ENCODE measurements at regions of chrX and their contacts with region 1.

Region 1: DNA sequence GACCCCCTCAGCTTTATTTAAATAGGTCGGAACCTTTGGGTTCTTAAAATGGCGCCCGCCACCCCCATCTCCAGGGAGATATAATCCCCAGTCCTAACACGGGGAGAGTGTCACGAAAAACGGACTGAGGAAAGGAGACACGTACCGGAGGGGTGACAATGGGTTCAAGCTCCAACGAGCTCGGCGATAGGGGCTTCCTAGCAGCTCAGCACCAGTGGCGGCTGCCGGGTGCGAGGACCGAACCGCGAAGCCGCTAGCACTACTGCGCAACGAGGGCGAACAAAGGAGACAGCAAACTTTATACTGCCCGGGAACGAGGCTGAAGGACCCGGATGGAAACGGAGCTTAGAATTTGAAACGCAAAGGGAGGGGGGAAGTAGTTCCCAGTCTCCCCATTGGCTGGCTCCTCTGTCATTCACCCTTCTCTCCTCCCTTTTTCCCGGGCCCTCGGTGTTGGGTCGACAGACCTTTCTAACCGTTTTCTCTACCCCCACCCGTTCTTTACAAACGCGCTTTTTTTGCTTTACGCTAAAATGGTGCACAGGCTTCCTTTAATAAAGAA is at the start of gene RBMX:
- DNase-seq: peak; percentile 91
- H3K4me3 Mint-ChIP-seq: peak within 1 kb of the TSS; percentile 92
- H3K27ac Mint-ChIP-seq: peak within 1 kb of the TSS; percentile 98
- H3K4me1 Mint-ChIP-seq: peaks cover 22% of the 10 kb centered on the region
- H3K27me3 Mint-ChIP-seq: no peaks in the 10 kb centered on the region
- total RNA-seq, gene RBMX: 225 to 236 TPM

Region 2: DNA sequence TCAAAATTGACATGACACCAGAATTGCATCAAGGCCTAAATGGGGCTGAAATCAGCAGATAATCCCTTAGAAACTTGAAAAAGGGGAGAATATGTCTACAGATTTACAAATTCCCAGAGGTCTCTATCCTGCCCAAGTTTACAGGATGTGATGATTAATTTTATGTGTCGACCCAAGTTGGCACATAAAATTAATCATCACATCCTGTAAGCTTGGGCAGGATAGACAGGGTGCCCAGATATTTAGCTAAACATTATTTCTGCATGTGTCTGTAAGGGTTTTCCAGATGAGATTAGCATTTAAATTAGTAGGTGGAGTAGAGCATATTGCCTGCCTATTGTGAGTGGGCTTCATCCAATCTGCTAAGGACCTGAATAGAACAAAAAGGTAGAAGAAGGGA is 152.1 kb before region 1 on chrX:
- CTCF ChIA-PET with region 1: no interaction called
- POLR2A ChIA-PET with region 1: interaction called, 13 read pairs
- DNase-seq: no peak
- H3K4me3 Mint-ChIP-seq: no peak overlapping the region
- H3K27ac Mint-ChIP-seq: peak overlapping the region; percentile 50
- H3K4me1 Mint-ChIP-seq: peaks cover 32% of the 10 kb centered on the region
- H3K27me3 Mint-ChIP-seq: no peaks in the 10 kb centered on the region

Region 3: GRCh38 chrX:136767104-136767941 is 113.2 kb before region 1 on chrX:
- CTCF ChIA-PET with region 1: interaction called, 6 read pairs
- POLR2A ChIA-PET with region 1: interaction called, 50 read pairs
- DNase-seq: peak; percentile 62
- H3K4me3 Mint-ChIP-seq: peak overlapping the region; percentile 72
- H3K27ac Mint-ChIP-seq: peak overlapping the region; percentile 88
- H3K4me1 Mint-ChIP-seq: peaks cover 66% of the 10 kb centered on the region
- H3K27me3 Mint-ChIP-seq: no peaks in the 10 kb centered on the region

Region 4: DNA sequence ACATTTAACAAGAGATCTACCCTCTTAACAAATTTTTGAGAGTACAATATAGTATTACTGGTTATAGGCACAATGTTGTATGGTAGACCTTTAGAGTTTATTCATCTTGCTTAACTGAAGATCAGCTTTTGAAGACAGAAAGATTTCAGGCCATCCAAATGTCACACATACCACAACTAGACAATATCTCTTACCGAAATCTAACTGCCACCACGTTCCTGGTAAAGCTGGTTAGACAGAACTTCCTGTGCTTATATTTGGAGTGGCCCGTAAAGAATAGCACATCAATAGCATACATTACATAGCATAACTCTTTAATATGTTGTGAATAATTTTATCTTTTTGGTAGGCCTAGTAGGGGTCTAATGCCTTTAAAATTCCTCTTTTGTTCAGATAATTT is 70.0 kb before region 1 on chrX:
- CTCF ChIA-PET with region 1: interaction called, 5 read pairs
- POLR2A ChIA-PET with region 1: interaction called, 18 read pairs
- DNase-seq: peak; percentile 18
- H3K4me3 Mint-ChIP-seq: no peak overlapping the region
- H3K27ac Mint-ChIP-seq: peak overlapping the region; percentile 81
- H3K4me1 Mint-ChIP-seq: peaks cover 24% of the 10 kb centered on the region
- H3K27me3 Mint-ChIP-seq: no peaks in the 10 kb centered on the region

Region 5: DNA sequence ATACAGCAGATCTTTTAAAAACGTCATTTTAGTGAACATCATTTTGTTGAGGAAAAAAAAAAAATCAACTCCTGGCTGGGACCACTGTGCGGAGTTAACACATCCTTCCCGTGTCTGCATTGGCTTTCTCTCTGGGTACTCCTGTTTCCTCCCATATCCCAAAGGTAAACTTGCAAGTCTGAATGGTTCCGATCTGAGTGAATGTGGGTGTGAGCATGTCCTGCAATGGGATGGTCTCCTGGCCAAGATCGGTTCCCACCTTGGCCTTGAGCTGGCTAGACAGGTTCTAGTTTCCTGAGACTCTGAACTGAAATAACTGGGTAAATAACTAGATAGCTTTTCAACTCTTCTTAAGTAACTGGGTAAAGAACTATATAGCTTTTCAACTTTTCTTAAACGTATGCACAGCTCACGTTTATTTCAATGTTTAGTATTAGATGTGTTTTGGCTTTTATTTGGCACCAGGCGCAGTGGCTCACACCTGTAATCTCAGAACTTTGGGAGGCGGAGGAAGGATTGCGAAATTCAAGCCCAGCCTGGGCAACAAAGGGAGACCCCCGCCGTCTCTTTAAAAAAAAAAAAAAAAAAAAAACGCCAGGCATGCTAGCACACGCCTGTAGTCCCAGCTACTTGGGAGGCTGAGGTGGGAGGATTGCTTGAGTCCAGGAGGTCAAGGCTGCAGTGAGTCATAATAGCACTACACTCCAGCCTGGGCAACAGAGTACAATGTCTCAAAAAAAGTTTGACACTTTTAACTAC is 14.0 kb before region 1 on chrX:
- CTCF ChIA-PET with region 1: no interaction called
- POLR2A ChIA-PET with region 1: interaction called, 51 read pairs
- DNase-seq: no peak
- H3K4me3 Mint-ChIP-seq: no peak overlapping the region
- H3K27ac Mint-ChIP-seq: peak overlapping the region; percentile 52
- H3K4me1 Mint-ChIP-seq: peaks cover 51% of the 10 kb centered on the region
- H3K27me3 Mint-ChIP-seq: no peaks in the 10 kb centered on the region